ENCODE measurements at regions of chr19 and their contacts with region 1.

Region 1: DNA sequence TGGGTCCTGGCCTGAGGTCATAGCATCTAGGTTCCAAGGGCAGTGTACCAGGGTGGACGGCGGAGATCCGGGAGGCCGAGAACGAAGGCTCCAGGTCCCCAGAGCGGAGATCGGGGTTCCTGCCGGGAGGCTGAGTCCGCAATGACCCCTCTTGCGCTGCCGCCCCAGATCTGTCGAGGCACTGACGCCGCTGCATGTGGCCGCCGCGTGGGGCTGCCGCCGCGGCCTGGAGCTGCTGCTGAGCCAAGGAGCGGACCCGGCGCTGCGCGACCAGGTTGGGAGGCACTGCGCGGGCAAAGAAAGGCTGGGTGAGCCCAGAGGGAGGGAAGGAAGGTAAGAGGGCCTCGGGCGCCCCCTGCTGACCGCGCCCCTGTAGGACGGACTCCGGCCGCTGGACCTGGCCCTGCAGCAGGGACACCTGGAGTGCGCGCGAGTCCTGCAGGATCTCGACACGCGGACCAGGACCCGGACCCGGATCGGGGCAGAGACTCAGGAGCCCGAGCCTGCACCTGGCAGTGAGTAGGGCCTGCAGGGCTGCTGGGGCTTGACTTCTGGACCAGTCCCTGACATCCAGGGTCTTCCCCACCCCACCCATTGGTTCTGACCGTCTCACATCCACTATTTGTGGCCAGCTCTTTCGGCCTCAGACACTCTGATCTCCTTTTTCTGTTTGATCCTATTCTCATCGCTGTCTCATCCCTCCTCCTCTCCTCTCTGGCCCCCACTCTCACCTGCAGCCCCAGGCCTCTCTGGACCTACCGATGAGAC is 971 bp downstream of the ANKLE1 start:
- DNase-seq: peak; percentile 81 to 92
- ATAC-seq: peak; percentile 98

Region 2: DNA sequence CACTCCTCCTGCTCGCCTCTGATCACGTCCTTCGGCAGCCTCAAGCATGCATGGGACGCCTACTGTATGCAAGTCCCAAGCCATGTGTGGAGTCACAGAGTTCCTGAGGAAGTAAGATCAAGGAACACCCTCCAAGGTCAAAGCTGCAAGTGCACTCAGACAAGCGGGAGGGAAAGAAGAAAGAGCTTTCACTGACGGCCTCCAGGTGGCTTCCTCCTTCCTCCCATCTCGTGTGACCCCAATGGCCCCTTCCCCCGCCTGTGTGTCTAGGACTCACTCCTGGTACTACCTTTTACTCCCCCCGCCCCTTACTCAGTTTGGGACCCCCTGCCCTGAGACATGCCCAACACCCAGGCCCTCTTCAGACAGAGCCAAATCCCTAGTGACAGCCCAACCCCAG is 213.5 kb before region 1 on chr19:
- intact Hi-C with region 1: loop called in 1 of 2 experiments (anchors 10 kb)
- DNase-seq: no peak
- ATAC-seq: no peak

Region 3: DNA sequence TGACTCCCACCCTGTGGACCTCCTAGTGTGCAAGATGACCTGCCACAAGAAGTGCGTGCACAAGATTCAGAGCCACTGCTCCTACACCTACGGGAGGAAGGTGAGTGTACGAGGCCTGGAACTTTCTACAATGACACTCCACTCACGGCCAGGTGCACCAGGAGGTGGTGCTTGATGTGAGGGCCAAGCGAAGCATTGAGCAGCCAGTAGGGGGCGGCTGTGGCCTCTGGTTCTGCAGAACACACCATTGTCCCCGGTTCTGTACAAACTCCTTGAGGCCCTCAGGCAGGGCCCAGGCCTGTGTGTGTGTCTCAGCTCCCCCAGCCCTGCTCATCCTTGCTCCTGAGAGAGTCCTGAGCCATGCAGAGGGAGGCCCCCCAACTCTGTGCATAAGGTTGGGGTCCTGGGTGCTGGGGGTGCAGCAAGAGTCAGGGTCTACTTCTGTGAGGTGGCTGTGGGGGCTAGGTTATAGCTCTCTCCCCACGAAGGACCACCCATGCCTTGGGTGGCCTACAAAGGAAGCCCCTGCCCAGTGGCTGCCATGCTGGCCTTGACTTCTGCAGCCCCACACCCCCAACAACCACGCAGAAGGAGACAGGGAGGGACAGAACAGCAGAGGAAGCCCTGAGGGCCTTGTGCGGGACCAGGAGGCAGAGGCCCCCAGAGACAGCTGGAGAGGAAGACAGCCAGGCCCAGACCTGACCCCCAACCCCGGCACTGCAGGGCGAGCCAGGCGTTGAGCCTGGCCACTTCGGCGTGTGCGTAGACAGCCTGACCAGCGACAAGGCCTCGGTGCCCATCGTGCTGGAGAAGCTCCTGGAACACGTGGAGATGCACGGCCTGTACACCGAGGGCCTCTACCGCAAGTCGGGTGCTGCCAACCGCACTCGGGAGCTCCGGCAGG is 77.2 kb before region 1 on chr19:
- intact Hi-C with region 1: loop called (anchors 5 to 10 kb)
- DNase-seq: peak; percentile 61 to 85
- ATAC-seq: peak; percentile 90

Measured in left colon (tissue), 2 donors.